PC-9 (cell line): ENCODE measurements at regions of chr9 and their contacts with region 1.

Region 1: GRCh38 chr9:100587375-100587774 is 9.5 kb downstream of the CAVIN4 start:
- DNase-seq: peak; percentile 65 to 68
- H3K4me3 ChIP-seq: no peak overlapping the region
- H3K27ac ChIP-seq: no peak overlapping the region
- H3K4me1 ChIP-seq: peaks cover 15% of the 10 kb centered on the region
- H3K27me3 ChIP-seq: no peaks in the 10 kb centered on the region
- CTCF ChIP-seq: no peak

Region 2: DNA sequence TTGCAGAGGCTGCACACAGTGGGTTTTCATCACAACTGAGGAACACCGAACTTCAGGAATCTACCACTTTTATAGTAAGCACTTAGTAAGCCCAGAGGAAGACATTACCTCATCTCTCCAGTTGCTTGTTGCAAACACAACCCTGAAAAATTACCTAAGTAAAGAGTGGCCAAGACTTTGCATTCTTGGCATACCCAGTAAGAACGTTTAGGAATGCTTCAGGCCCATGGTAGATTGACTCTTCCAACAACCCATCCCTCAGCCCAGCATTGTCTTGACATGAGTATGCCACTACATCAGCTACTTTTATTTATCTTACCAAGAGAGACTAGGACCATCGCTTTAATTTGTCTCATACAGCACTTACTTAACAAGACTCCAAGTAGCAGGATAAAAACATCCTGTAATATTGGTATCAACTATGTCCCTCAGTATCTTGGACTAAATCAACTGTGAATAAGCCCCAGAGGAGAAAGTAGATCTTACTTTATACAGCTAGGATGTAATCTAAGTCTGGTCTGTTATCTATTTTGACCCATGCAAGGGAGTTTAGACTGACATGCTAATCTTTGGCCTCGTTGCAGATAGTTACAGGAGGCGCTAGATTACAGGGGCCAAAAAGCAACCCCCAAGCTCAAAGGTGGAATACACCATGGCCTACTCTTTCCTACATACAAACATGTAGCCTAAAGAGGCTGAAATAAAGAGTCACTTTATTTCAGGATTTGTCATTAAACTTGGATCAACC is 373.5 kb before region 1 on chr9:
- CTCF ChIA-PET with region 1: no interaction called
- POLR2A ChIA-PET with region 1: no interaction called
- intact Hi-C with region 1: no loop called
- DNase-seq: no peak
- H3K4me3 ChIP-seq: no peak overlapping the region
- H3K27ac ChIP-seq: no peak overlapping the region
- H3K4me1 ChIP-seq: no peaks in the 10 kb centered on the region
- H3K27me3 ChIP-seq: no peaks in the 10 kb centered on the region
- CTCF ChIP-seq: no peak

Region 3: GRCh38 chr9:100515578-100516494 is 71.5 kb before region 1 on chr9:
- CTCF ChIA-PET with region 1: interaction called, 3 read pairs
- POLR2A ChIA-PET with region 1: no interaction called
- intact Hi-C with region 1: loop called (anchors 2 kb)
- DNase-seq: peak; percentile 23 to 65
- H3K4me3 ChIP-seq: peak overlapping the region; percentile 42; the same call in 1 of the 2 replicates
- H3K27ac ChIP-seq: peak overlapping the region; percentile 86
- H3K4me1 ChIP-seq: peaks cover 26% of the 10 kb centered on the region
- H3K27me3 ChIP-seq: no peaks in the 10 kb centered on the region
- CTCF ChIP-seq: no peak